HEK293 (cell line): ENCODE measurements at regions of chr17 and their contacts with region 1.

Region 1: DNA sequence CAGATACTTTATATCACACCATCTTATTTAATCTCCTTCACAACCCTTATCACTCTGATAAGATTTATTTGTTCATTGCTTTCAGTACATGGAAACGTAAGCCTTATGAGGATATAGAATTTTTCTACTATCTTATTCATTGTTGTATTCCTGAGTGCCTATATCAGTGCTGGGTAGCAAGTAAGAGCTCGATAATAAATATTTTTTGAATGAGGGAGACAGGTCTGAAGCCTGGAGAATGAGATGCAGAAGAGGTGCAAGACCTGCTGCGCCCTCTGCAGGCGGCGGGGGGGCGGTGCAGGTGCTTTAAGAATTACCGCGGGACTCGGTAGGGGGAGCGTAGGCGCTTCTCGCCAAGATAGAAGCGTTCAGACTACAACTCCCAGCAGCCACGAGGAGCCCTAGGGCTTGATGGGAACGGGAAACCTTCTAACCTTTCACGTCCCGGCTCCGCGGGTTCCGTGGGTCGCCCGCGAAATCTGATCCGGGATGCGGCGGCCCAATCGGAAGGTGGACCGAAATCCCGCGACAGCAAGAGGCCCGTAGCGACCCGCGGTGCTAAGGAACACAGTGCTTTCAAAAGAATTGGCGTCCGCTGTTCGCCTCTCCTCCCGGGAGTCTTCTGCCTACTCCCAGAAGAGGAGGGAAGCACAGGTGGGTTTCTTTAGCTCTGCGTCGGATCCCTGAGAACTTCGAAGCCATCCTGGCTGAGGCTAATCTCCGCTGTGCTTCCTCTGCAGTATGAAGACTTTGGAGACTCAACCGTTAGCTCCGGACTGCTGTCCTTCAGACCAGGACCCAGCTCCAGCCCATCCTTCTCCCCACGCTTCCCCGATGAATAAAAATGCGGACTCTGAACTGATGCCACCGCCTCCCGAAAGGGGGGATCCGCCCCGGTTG is at the start of gene WRAP53:
- H3K4me3 ChIP-seq: peak within 1 kb of the TSS; percentile 93
- H3K27ac ChIP-seq: peak within 1 kb of the TSS; percentile 96
- H3K4me1 ChIP-seq: peaks cover 13% of the 10 kb centered on the region
- CTCF ChIP-seq: peak; percentile 99

Region 2: GRCh38 chr17:7484067-7484918 is 203.9 kb before region 1 on chr17 and contains the start of gene POLR2A:
- CTCF ChIA-PET with region 1: no interaction called
- POLR2A ChIA-PET with region 1: interaction called, 24 read pairs
- H3K4me3 ChIP-seq: peak within 1 kb of the TSS; percentile 87
- H3K27ac ChIP-seq: peak within 1 kb of the TSS; percentile 100
- H3K4me1 ChIP-seq: peaks cover 23% of the 10 kb centered on the region
- CTCF ChIP-seq: no peak

Region 3: GRCh38 chr17:7583253-7584109 is 104.7 kb before region 1 on chr17 and contains the start of gene MPDU1:
- CTCF ChIA-PET with region 1: interaction called, 18 read pairs
- POLR2A ChIA-PET with region 1: interaction called, 93 read pairs
- H3K4me3 ChIP-seq: peak within 1 kb of the TSS; percentile 86
- H3K27ac ChIP-seq: peak within 1 kb of the TSS; percentile 95
- H3K4me1 ChIP-seq: peaks cover 8% of the 10 kb centered on the region; the same call in 1 of the 2 replicates
- CTCF ChIP-seq: peak; percentile 52

Region 4: DNA sequence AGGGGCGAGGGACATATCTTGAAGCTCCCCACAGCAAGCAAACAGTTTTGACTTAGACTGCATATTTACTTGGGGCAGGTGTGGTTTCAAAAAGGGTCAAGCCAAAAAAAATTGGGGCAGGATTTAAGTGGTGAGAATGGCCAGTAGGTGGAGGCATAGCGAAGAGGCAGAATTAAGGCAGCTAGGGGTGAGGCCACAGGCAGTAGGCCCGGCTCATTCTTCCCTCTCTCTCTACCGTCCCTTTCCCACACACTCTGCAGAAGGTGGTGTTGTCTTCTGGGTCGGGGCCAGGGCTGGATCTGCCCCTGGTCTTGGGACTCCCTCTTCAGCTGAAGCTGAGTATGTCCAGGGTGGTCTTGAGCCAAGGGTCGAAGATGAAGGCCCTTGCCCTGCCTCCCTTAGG is 55.7 kb before region 1 on chr17:
- CTCF ChIA-PET with region 1: interaction called, 207 read pairs
- POLR2A ChIA-PET with region 1: interaction called, 215 read pairs
- H3K4me3 ChIP-seq: no peak overlapping the region
- H3K27ac ChIP-seq: peak overlapping the region; percentile 20; the same call in 1 of the 2 replicates
- H3K4me1 ChIP-seq: no peaks in the 10 kb centered on the region
- CTCF ChIP-seq: peak; percentile 91

Region 5: DNA sequence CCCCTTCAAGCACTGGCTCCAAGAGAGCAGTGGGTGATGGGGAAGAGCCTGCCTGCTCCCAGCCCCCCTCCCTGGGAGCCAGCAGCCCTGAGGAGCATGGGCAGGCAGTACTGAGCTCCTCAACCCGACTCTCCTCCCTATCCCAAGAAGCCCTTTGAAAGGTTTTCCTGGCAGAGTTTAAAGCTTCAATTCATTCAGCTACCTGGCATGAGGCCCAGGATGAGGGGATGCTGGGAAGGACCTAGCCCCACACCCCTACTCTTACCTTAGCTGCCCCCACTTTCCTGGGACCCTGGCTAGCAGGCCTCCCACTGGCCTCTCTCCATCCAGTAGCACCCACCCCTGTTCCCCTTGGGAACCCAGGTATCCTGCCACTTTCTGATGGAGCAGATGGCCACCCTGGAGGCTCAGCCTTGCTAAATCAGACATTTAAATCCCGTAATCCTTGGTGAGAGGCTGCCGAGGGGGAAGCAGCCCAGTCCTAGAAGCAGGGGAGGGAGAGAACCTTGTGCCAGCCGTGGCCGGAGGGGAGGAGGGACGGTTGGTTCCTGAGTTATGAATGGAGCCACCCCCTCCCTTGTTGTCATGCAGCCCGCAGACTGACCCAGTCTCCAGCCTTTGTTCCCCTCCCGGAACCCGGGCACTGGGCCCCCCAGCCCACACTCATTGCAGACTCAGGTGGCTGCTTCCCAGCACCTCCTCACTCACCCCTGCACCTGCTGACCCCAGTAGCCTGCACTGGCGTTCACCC is 20.3 kb before region 1 on chr17:
- CTCF ChIA-PET with region 1: interaction called, 55 read pairs
- POLR2A ChIA-PET with region 1: interaction called, 38 read pairs
- H3K4me3 ChIP-seq: no peak overlapping the region
- H3K27ac ChIP-seq: 0 out of 2 replicates have a peak overlapping the region, but pooled peaks have one; percentile 16
- H3K4me1 ChIP-seq: no peaks in the 10 kb centered on the region
- CTCF ChIP-seq: no peak

Region 6: GRCh38 chr17:7716901-7717755 is 29.0 kb after region 1 on chr17 and contains the start of gene DNAH2:
- CTCF ChIA-PET with region 1: interaction called, 18 read pairs
- POLR2A ChIA-PET with region 1: interaction called, 16 read pairs
- H3K4me3 ChIP-seq: peak within 1 kb of the TSS; percentile 54
- H3K27ac ChIP-seq: peak within 1 kb of the TSS; percentile 38; the same call in 1 of the 2 replicates
- H3K4me1 ChIP-seq: peaks cover 9% of the 10 kb centered on the region
- CTCF ChIP-seq: peak; percentile 96

Region 7: GRCh38 chr17:7856883-7857723 is 168.9 kb after region 1 on chr17 and contains the start of gene NAA38:
- CTCF ChIA-PET with region 1: no interaction called
- POLR2A ChIA-PET with region 1: interaction called, 20 read pairs
- H3K4me3 ChIP-seq: peak within 1 kb of the TSS; percentile 88
- H3K27ac ChIP-seq: peak within 1 kb of the TSS; percentile 90
- H3K4me1 ChIP-seq: peaks cover 8% of the 10 kb centered on the region; the same call in 1 of the 2 replicates
- CTCF ChIP-seq: peak; percentile 97